ENCODE measurements at regions of chr4 and their contacts with region 1.

Region 1: GRCh38 chr4:157304769-157305168 is 84.2 kb downstream of the GRIA2 start:
- DNase-seq: no peak

Region 2: GRCh38 chr4:157246964-157247363 is 57.8 kb before region 1 on chr4:
- in situ Hi-C with region 1: loop called (anchors 5 kb)
- DNase-seq: no peak